A549 (cell line): ENCODE measurements at regions of chr11 and their contacts with region 1.

Region 1: DNA sequence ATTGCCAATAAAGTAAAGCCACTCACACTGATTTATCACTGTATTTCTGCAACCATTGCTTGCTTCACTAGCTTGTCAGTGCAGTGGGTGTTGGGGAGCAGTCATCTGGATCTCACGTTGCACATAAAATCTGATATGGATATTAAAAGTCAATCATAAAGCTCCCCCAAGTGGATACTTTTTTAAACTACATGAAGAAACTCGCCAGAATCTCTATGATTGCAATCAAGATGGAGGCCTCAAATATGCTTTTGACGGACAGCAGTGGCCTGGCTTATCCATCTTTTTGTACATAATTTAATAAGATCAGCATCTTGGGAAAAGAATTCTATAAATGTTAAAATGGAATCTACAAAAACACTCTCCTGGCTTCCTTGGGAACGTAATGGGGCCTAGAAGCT is 137.7 kb downstream of the WT1 start:
- DNase-seq: peak; percentile 44 to 57
- ATAC-seq: peak; percentile 81 to 84
- H3K4me3 ChIP-seq: no peak overlapping the region
- H3K27ac ChIP-seq: no peak overlapping the region
- H3K4me1 ChIP-seq: no peaks in the 10 kb centered on the region
- CTCF ChIP-seq: peak; percentile 66
- EP300 ChIP-seq: no peak
- POLR2A ChIP-seq: no peak
- RAD21 ChIP-seq: peak; percentile 52 to 74

Region 2: GRCh38 chr11:31107062-31107461 is 1190.5 kb before region 1 on chr11:
- CTCF ChIA-PET with region 1: interaction called, 10 read pairs
- POLR2A ChIA-PET with region 1: no interaction called
- DNase-seq: peak; percentile 26 to 65
- ATAC-seq: peak; percentile 94 to 97
- H3K4me3 ChIP-seq: no peak overlapping the region
- H3K27ac ChIP-seq: no peak overlapping the region
- H3K4me1 ChIP-seq: no peaks in the 10 kb centered on the region
- CTCF ChIP-seq: peak; percentile 79
- EP300 ChIP-seq: no peak
- POLR2A ChIP-seq: no peak
- RAD21 ChIP-seq: peak; percentile 85

Region 3: GRCh38 chr11:32052218-32052617 is 245.4 kb before region 1 on chr11:
- CTCF ChIA-PET with region 1: interaction called, 14 read pairs
- POLR2A ChIA-PET with region 1: no interaction called
- DNase-seq: peak; percentile 38 to 51
- ATAC-seq: peak; percentile 73 to 85; a peak in 3 of 6 replicates
- H3K4me3 ChIP-seq: no peak overlapping the region
- H3K27ac ChIP-seq: no peak overlapping the region
- H3K4me1 ChIP-seq: no peaks in the 10 kb centered on the region
- CTCF ChIP-seq: peak; percentile 81
- EP300 ChIP-seq: no peak
- POLR2A ChIP-seq: no peak
- RAD21 ChIP-seq: peak; percentile 78 to 81

Region 4: GRCh38 chr11:32204751-32205150 is 92.9 kb before region 1 on chr11:
- CTCF ChIA-PET with region 1: no interaction called
- POLR2A ChIA-PET with region 1: no interaction called
- DNase-seq: no peak
- ATAC-seq: no peak
- H3K4me3 ChIP-seq: no peak overlapping the region
- H3K27ac ChIP-seq: no peak overlapping the region
- H3K4me1 ChIP-seq: no peaks in the 10 kb centered on the region
- CTCF ChIP-seq: no peak
- EP300 ChIP-seq: no peak
- POLR2A ChIP-seq: no peak
- RAD21 ChIP-seq: no peak

Region 5: DNA sequence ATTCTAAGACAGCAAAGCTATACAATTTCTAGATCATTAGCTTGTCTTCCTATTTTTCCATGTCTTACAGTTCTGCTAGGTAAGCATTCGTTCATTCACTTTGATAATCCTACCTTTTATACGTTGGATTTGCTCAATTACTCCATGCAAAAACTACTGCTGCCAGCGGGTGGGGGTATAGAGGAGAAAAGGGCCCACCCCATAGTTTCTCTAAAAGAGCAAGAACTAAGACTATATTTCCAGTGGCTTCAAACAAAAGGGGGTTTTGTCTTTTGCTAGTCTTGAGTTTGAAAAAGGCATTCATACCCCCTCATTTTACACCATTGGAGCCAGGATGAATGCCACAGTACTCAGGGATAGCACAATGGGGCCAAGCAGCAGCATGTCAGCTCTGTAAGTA is 17.9 kb before region 1 on chr11:
- CTCF ChIA-PET with region 1: interaction called, 16 read pairs
- POLR2A ChIA-PET with region 1: no interaction called
- DNase-seq: no peak
- ATAC-seq: no peak
- H3K4me3 ChIP-seq: no peak overlapping the region
- H3K27ac ChIP-seq: no peak overlapping the region
- H3K4me1 ChIP-seq: no peaks in the 10 kb centered on the region
- CTCF ChIP-seq: no peak
- EP300 ChIP-seq: no peak
- POLR2A ChIP-seq: no peak
- RAD21 ChIP-seq: no peak

Region 6: GRCh38 chr11:32312865-32313403 is 15.3 kb after region 1 on chr11:
- CTCF ChIA-PET with region 1: interaction called, 18 read pairs
- POLR2A ChIA-PET with region 1: no interaction called
- DNase-seq: peak; percentile 79 to 88
- ATAC-seq: peak; percentile 89 to 94
- H3K4me3 ChIP-seq: peak overlapping the region; percentile 18; the same call in 1 of the 3 replicates
- H3K27ac ChIP-seq: peak overlapping the region; percentile 80 to 87
- H3K4me1 ChIP-seq: peaks cover 41% of the 10 kb centered on the region
- CTCF ChIP-seq: peak; percentile 91
- EP300 ChIP-seq: no peak
- POLR2A ChIP-seq: no peak
- RAD21 ChIP-seq: peak; percentile 44 to 54

Region 7: DNA sequence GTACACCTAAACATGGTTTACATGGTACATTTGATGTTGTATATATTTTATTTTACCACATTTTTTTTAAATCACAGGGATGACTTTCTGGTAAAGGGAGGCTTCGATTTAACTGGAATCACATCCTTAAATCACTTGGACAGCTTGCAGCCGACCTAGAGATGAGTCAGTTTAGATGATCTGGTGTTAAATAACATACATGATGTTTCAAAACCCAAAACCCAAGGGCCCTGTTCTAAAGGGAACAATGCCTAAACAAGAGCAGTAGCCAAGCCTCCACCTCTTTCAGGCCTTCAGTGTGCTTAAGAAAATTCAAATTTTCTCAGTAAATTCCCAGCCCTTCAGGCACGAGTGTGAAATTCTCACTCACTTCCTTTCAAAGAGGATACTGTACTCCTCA is 28.9 kb after region 1 on chr11:
- CTCF ChIA-PET with region 1: interaction called, 10 read pairs
- POLR2A ChIA-PET with region 1: no interaction called
- DNase-seq: no peak
- ATAC-seq: no peak
- H3K4me3 ChIP-seq: no peak overlapping the region
- H3K27ac ChIP-seq: no peak overlapping the region
- H3K4me1 ChIP-seq: no peaks in the 10 kb centered on the region
- CTCF ChIP-seq: no peak
- EP300 ChIP-seq: no peak
- POLR2A ChIP-seq: no peak
- RAD21 ChIP-seq: no peak